GM10248 (cell line): ENCODE measurements at regions of chr1 and their contacts with region 1.

Region 1: GRCh38 chr1:41368366-41368765 is 7.1 kb downstream of the FOXO6 start:
- DNase-seq: no peak
- CTCF ChIP-seq: no peak

Region 2: DNA sequence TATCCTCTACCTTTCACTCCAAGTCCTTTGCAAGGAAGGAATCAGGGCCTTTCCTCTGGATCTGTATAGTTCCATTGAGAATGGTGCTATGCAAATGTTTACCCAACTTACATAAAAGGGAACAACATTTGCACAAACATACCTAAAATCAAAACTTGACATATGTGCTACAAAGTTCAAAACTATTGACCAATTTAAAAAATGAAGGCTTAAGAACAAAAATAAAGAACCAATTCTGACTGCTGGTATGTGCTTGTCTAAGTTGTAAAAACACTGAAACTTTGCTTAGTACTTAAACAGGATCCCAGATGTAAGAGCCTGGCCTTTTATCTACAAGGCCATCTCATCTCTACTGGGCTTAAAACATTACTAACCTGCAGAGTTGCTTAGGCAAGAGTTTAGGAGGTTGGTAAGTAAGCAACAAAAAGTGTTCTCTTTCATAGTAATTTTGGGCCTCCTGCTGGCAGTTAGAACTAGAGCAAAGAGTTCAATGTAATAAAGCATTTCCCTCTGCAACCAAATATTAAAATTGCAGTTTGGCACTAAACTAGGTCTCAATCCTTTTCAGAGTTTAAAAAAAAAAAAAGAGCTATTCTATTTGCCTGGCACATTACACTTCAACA is 128.3 kb before region 1 on chr1:
- CTCF ChIA-PET with region 1: no interaction called
- POLR2A ChIA-PET with region 1: interaction called, 10 read pairs
- DNase-seq: no peak
- CTCF ChIP-seq: peak; percentile 30